Dendritic cell treated with granulocyte-macrophage colony-stimulating factor and Interleukin-4, amounts not matched to agents 40 ng/mL and 50 ng/mL, for 4 days (primary cell): ENCODE measurements at regions of chr16 and their contacts with region 1.

Region 1: DNA sequence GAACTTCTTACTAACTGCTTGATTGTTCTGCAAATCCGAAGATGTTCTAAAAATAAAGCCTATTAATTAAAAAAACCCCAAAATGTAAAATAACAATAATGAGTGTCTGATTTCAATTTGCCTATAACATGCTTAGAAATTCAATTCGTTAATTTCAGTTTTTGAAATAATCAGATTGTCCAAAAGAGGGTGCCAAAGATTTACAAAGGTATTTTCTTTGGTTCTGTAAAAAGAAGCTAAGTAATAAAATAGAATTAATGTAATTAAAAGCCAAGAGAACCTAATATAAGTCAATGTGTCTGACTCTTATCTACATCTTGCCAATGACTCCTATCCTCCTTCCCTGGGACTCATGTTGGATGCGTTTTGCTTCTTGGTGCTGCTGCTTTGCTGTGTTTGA is 75.0 kb upstream of the CPHXL start:
- H3K4me3 Mint-ChIP-seq: no peak overlapping the region
- H3K27ac Mint-ChIP-seq: no peak overlapping the region
- H3K4me1 Mint-ChIP-seq: no peaks in the 10 kb centered on the region
- H3K27me3 Mint-ChIP-seq: peaks cover 3% of the 10 kb centered on the region

Region 2: GRCh38 chr16:75392911-75393310 is 408.4 kb before region 1 on chr16:
- intact Hi-C with region 1: no loop called
- H3K4me3 Mint-ChIP-seq: no peak overlapping the region
- H3K27ac Mint-ChIP-seq: no peak overlapping the region
- H3K4me1 Mint-ChIP-seq: no peaks in the 10 kb centered on the region
- H3K27me3 Mint-ChIP-seq: peaks cover 66% of the 10 kb centered on the region

Region 3: DNA sequence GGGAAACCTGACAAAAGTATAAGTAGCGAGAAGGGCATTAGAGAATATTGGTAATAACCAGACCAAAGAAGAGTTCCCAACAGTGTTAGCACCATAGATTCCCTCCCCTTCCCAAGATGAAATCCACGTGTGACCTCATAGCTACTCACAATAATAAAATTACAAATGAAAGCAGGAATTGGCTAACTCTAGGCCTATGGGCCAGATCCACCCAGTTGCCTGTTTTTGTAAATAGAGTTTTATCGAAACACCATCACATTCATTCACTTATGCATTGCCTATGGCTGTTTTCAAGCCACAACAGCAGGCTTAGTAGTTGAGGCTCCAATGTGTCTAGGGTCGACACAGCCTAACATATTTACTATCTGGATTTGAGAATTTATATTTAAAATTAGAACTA is 82.9 kb before region 1 on chr16:
- intact Hi-C with region 1: no loop called
- H3K4me3 Mint-ChIP-seq: no peak overlapping the region
- H3K27ac Mint-ChIP-seq: no peak overlapping the region
- H3K4me1 Mint-ChIP-seq: no peaks in the 10 kb centered on the region
- H3K27me3 Mint-ChIP-seq: no peaks in the 10 kb centered on the region

Region 4: DNA sequence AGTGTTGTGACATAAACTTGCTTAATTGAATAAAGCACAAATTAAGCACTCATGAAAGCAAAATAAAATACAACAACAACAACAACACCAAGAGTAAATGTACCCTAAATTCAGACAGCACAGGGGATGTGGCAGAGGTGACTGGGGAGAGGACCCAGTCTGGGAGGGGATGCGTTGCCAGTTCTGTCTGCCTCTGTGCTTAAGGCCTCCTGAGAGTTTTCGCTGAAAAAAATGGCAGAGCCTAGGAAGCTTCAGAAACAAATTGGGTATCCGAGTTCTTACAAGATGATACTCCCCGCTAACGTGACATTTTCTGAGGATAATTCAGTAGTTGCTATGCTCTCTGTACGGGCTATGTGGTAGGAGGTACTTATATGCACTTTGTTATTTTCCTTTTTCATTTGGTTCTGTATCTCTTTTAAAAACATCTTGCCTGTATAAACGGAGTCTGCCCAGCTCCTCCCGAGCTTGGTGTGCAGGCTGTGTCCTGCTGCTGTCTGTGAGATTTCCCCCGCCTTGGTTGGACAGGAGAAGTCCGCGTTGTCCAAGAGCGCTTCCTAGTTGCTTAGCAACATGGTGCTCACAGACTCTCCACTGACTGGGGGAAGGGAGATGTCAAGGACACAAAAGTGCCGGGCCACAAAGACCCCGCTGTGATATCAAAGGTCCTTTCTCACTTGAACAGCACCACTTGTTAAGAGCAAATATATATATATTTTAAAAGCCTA is 59.2 kb after region 1 on chr16:
- intact Hi-C with region 1: loop called (anchors 10 kb)
- H3K4me3 Mint-ChIP-seq: no peak overlapping the region
- H3K27ac Mint-ChIP-seq: no peak overlapping the region
- H3K4me1 Mint-ChIP-seq: no peaks in the 10 kb centered on the region
- H3K27me3 Mint-ChIP-seq: no peaks in the 10 kb centered on the region

Region 5: GRCh38 chr16:75965504-75966374 is 164.4 kb after region 1 on chr16:
- intact Hi-C with region 1: no loop called
- H3K4me3 Mint-ChIP-seq: no peak overlapping the region
- H3K27ac Mint-ChIP-seq: no peak overlapping the region
- H3K4me1 Mint-ChIP-seq: no peaks in the 10 kb centered on the region
- H3K27me3 Mint-ChIP-seq: no peaks in the 10 kb centered on the region

Region 6: DNA sequence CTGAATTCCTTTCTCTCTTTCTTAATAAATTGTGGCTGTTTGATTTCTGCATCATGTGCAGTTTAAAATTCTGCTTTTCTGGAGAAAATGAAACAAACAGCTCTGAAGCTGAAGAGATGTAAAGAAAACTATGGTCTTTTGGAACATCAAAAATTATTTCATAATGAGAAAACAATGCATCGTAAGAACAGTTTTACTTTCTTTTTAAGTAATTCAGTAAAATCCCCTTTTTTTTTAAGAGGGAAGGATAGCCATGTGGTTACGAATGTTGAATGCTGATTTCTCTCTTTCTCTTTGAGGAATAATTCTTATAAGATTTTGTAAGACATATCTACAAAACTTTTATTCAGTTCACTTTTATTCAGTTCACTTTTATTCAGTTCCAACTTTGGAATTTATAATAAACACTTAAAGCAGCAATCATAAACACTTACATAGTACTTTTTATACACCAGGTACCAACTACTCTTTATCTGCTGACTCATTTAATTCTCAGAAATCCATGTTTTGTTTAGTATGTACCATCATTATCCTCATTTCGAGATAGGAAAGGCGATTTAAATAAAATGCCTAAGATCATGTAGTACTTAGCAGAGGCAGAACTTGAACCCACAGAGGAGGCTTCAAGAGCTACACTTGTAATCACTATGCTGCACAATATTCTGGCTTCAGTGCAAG is 502.5 kb after region 1 on chr16:
- intact Hi-C with region 1: no loop called
- H3K4me3 Mint-ChIP-seq: no peak overlapping the region
- H3K27ac Mint-ChIP-seq: no peak overlapping the region
- H3K4me1 Mint-ChIP-seq: no peaks in the 10 kb centered on the region
- H3K27me3 Mint-ChIP-seq: no peaks in the 10 kb centered on the region